Activated CD4-positive, alpha-beta T cell treated with anti-CD3 and anti-CD28 coated beads for 36 hours (primary cell): ENCODE measurements at regions of chr5 and their contacts with region 1.

Region 1: GRCh38 chr5:3595006-3595961 is at the start of gene IRX1:
- DNase-seq: no peak
- ATAC-seq: no peak
- H3K4me3 Mint-ChIP-seq: no peak within 1 kb of the TSS
- H3K27ac Mint-ChIP-seq: no peak within 1 kb of the TSS
- H3K4me1 Mint-ChIP-seq: peaks cover 10% of the 10 kb centered on the region
- H3K27me3 Mint-ChIP-seq: peaks cover 61% of the 10 kb centered on the region
- total RNA-seq, gene IRX1: not detected

Region 2: DNA sequence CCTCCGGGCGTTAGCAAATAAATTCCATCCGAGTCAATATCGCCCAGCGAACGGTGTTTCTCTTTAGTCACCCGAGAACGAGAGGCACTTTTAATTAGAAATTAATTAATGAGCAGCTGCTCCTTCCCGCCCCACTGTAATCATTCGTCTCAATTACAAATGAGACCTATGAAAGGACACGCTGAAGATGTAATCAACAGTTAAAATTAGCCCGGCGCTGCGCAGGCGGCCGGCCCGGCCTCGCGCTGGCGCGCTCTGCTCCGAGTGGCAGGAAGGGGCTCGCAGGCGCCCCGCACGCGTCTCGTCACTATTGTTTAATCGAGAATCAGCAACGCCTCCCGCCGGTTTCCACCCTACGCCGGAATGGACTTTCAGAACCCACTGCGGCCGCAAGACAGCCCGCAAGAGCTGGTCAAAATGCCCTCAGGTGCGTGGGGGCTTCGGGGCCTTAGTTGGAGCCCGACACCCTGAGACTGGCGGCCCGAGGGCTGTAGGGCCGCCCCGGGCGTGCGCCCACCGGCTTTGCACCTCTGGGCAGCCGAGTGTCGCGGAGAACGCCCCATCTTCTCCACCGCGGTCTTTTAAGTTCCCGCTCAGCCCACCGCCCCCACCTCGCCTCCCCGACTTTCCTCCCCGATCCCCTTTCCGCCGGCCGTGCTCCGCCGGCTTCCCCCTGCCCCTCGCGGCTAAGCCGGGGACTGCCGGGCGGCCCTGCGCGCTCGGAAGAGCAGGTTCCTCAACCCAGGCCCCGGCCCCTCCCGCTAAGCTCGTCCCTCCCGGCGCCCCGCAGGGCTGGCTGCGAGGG is 1712.0 kb before region 1 on chr5:
- CTCF ChIA-PET with region 1: no interaction called
- POLR2A ChIA-PET with region 1: no interaction called
- intact Hi-C with region 1: loop called in 1 of 2 experiments (anchors 5 kb)
- DNase-seq: peak; percentile 39
- ATAC-seq: peak; percentile 54
- H3K4me3 Mint-ChIP-seq: no peak overlapping the region
- H3K27ac Mint-ChIP-seq: no peak overlapping the region
- H3K4me1 Mint-ChIP-seq: peaks cover 5% of the 10 kb centered on the region
- H3K27me3 Mint-ChIP-seq: peaks cover 37% of the 10 kb centered on the region

Region 3: DNA sequence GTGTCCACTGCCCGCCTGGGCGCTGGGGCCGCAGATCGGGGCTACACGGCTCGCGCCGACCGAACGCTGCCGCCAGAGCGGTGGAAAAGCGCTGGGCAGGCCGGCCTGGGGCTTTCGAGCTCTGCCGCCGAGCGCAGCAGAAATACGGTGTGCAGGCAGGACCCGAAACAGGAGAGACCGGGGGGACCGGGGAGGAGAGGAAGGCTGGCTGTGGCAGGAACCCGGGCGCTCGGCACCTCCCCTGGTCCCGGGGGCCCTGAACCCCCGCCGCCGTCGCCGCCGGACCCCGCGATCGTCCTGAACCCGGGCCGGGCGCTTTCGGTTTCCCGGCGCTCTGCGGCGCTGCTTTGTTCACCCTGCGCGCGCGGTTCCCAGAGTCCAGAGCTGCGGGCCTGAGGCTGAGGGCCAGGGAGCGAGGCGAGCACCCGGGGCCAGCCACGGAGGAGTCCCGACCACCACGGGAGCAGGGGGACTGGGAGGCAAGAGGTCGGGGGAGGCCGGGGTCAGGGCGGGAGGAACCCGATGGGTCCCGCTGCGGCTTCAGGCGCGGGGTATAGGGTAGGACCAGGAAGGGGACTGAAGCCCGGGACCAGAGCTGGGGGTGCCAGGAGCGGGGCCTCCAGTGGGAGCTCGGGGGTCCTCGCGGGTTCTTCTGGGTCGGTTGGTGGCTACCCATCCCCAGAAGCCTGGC is 855.8 kb before region 1 on chr5:
- CTCF ChIA-PET with region 1: no interaction called
- POLR2A ChIA-PET with region 1: no interaction called
- intact Hi-C with region 1: loop called in 1 of 2 experiments (anchors 5 kb)
- DNase-seq: no peak
- ATAC-seq: no peak
- H3K4me3 Mint-ChIP-seq: no peak overlapping the region
- H3K27ac Mint-ChIP-seq: no peak overlapping the region
- H3K4me1 Mint-ChIP-seq: no peaks in the 10 kb centered on the region
- H3K27me3 Mint-ChIP-seq: peaks cover 53% of the 10 kb centered on the region